AG04450 (cell line): ENCODE measurements at regions of chr7 and their contacts with region 1.

Region 1: GRCh38 chr7:154953006-154953684 is 49.8 kb downstream of the PAXIP1 start:
- DNase-seq: no peak
- H3K4me3 ChIP-seq: no peak overlapping the region
- H3K27ac ChIP-seq: no peak overlapping the region
- H3K27me3 ChIP-seq: no peaks in the 10 kb centered on the region
- CTCF ChIP-seq: peak; percentile 68

Region 2: DNA sequence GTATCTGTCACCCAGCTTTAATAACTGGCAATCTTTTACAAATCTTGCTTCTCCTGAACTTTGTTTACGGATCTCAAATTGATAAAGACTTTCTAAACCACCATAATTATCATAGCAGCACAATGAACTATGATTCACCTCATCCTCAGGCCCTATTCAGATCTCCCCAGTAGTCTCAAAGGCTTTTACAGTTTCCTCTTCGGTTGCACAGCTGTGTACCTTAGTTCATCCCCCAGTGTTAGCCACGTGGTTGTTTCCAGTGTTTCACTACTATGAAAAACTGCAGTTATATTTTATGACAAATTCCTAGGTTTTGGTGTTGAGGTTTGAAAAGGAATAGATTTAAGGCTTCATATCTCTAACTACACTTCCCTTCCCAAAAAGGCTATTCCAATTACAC is 24.9 kb after region 1 on chr7:
- CTCF ChIA-PET with region 1: interaction called, 13 read pairs
- POLR2A ChIA-PET with region 1: no interaction called
- DNase-seq: no peak
- H3K4me3 ChIP-seq: no peak overlapping the region
- H3K27ac ChIP-seq: no peak overlapping the region
- H3K27me3 ChIP-seq: no peaks in the 10 kb centered on the region
- CTCF ChIP-seq: no peak